HEK293T (cell line): ENCODE measurements at regions of chr7 and their contacts with region 1.

Region 1: DNA sequence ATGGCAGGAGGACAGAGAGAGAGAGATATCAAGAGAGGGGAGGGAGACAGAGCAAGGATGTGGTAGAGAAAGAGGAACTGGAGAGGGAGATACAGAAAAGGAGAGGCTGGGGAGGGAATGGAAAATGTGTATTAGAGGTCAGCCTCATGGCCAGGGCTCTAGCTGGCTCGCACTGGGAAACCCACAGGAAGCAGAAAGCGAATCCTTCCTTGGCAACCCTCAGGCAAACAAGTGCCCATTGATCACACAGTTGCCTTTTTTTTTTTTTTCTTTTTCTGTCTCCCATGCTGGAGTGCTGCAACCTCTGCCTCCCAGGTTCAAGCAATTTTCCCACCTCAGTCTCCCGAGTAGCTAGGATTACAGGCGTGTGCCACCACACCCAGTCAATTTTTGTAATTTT is 391.2 kb downstream of the TYW1 start:
- DNase-seq: no peak

Region 2: DNA sequence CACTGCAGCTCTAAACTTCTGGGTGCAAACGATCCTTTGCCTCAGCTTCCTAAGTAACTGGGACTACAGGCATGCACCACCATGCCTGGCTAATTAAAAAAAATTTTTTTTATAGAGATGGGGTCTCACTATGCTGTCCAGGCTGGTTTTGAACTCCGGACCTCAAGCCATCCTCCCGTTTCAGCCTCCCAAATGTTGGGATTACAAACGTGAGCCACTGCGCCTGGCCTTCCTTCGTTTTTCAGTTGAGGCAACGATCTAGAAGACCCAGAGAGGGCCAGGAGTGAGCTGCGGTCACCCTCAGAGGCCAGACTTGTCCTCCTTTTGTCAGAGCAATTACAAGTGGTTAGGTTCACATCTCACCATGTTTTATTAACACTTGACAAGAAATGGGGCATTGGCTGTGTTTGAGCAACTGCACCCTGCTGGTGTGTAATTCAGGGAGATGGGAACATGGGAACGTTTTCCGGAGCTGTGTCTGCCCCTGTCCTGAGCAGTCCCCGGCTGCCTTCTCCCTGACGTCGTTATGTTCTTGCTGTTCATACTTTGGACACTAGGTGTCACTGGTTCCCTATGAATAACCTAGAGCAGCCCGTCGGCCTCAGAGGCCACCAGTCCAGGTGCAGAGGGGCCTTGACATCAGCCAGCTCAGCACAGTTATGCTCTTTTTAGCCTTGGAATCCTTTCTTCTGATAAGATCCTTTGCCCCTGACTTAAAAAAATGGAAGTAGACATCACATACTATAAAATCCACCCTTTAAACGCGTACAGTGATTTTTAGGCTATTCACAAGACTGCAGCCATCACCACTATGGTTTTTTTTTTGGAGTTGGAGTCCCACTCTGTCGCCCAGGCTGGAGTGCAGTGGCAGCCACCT is 16.2 kb before region 1 on chr7:
- CTCF ChIA-PET with region 1: interaction called, 10 read pairs
- POLR2A ChIA-PET with region 1: no interaction called
- DNase-seq: peak; percentile 86

Region 3: DNA sequence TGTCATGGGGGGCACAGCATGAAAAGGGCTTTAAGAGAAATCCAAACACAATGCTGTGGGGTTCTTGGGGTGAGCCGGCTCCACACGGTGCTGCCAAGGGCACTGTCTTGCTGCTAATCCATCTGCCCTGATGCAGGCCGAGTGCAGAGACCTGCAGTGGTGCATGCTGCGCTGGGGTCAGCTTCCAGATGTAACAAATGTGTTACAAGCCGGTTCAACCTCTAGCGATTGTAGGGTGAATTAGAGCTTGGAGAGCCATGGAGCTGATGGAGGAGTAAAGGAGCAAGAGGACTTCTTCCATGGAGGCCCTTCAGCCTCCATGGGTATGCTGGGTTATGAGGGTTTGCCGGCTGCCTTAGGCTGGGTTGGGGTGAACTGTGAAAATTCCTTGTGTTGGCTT is 11.1 kb after region 1 on chr7:
- CTCF ChIA-PET with region 1: no interaction called
- POLR2A ChIA-PET with region 1: no interaction called
- DNase-seq: no peak

Region 4: GRCh38 chr7:67858931-67859330 is 471.1 kb after region 1 on chr7:
- CTCF ChIA-PET with region 1: no interaction called
- POLR2A ChIA-PET with region 1: no interaction called
- DNase-seq: no peak